ENCODE measurements at regions of chr17 and their contacts with region 1.

Region 1: GRCh38 chr17:19440421-19440820 is 29.4 kb downstream of the RNF112 start:
- DNase-seq: no peak
- ATAC-seq: no peak
- H3K4me3 ChIP-seq: no peak overlapping the region
- H3K27ac ChIP-seq: no peak overlapping the region
- H3K4me1 ChIP-seq: no peaks in the 10 kb centered on the region
- H3K27me3 ChIP-seq: no peaks in the 10 kb centered on the region
- CTCF ChIP-seq: no peak

Region 2: DNA sequence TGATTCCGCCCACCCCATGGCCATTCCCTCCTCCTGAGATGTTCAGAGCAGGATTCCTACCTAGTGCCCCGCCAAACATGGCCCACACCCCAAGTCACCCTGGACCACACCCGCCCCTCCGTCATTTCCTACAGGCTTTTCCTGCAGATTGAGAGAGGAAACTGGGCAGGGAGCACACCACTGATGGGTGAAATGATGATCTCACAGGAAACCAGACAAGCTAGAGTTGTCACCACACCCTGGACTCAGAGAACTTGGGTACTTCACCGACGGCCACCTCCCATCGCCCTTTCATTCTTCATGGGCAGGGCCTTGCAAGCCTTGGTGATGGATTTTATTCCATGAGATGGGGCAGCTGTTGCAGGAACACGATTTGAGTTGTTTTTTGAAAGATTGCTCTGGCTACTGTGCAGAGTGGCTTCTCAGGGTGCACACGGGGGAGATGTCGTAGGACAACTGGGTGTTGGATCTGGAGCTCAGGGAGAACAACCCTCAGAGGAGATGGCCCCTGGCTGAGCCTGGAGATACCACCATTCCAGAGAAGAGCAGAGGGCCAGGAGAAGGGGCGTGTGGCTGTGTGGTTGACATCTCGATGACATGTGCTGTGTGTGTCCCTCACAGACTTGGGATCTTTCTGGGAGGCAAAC is 70.5 kb before region 1 on chr17:
- intact Hi-C with region 1: loop called (anchors 5 kb)
- DNase-seq: no peak
- ATAC-seq: peak; percentile 58 to 64
- H3K4me3 ChIP-seq: no peak overlapping the region
- H3K27ac ChIP-seq: peak overlapping the region; percentile 58
- H3K4me1 ChIP-seq: peaks cover 35% of the 10 kb centered on the region
- H3K27me3 ChIP-seq: no peaks in the 10 kb centered on the region
- CTCF ChIP-seq: no peak

Region 3: GRCh38 chr17:19502517-19502916 is 62.1 kb after region 1 on chr17:
- intact Hi-C with region 1: no loop called
- DNase-seq: no peak
- ATAC-seq: no peak
- H3K4me3 ChIP-seq: no peak overlapping the region
- H3K27ac ChIP-seq: no peak overlapping the region
- H3K4me1 ChIP-seq: no peaks in the 10 kb centered on the region
- H3K27me3 ChIP-seq: no peaks in the 10 kb centered on the region
- CTCF ChIP-seq: no peak